Uterus (tissue), 4 donors: ENCODE measurements at regions of chr16 and their contacts with region 1.

Region 1: GRCh38 chr16:70523076-70523742 is at the start of gene COG4:
- DNase-seq: peak; percentile 80 to 85
- H3K4me3 ChIP-seq: peak within 1 kb of the TSS; percentile 90 to 95
- H3K27ac ChIP-seq: peak within 1 kb of the TSS; percentile 89 to 90
- H3K4me1 ChIP-seq: peaks cover 16 to 33% of the 10 kb centered on the region in 2 donors
- H3K27me3 ChIP-seq: no peaks in the 10 kb centered on the region
- CTCF ChIP-seq: no peak
- POLR2A ChIP-seq: no peak
- total RNA-seq, gene COG4: 33.3 to 137 (median 67.1) TPM

Region 2: GRCh38 chr16:70416748-70417616 is 106.2 kb before region 1 on chr16:
- intact Hi-C with region 1: no loop called
- DNase-seq: no peak
- H3K4me3 ChIP-seq: no peak overlapping the region
- H3K27ac ChIP-seq: no peak overlapping the region
- H3K4me1 ChIP-seq: peaks cover 0 to 6% of the 10 kb centered on the region in 2 donors
- H3K27me3 ChIP-seq: no peaks in the 10 kb centered on the region
- CTCF ChIP-seq: no peak
- POLR2A ChIP-seq: no peak

Region 3: DNA sequence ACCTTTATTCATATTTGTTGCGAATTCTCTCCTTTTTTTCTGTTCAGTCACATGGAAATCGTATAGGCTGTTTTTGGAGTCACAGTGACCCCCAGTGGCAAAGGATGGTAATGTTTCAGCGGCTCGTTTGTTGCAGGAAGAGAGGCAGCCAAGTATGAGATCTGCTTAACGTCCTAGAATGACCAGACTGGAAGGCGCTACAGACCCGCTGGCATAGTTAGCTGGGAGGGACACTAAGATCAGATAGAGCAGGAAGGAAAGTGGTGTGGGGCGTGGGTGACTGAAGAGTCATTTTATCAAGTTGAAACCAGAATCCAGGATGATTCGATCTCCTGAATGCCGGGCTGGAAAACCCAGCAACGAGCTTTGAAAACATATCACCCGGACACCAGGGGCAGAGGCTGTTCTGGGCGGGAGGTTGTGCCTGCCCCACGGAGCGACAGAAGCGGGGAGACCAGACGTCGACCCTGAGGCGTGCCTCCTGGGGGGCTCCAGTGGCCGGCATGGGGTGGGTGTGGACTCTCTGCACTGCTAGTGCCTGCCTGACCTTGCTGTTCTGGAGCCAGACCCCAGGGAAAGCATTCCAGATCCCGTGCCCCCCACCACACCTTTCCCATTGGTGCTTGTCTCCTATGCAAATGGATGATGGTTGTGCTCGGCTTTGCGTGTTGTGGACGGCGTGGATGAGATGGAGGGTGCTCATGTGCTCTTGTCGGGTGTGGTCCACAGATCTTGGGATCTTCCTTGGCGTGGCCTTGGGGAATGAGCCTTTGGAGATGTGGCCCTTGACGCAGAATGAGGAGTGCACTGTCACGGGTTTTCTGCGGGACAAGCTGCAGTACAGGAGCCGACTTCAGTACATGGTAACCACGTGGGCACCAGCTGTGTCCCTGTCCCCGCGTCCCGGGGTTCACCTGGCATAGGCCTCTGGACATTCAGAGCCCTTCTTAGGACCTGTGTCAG is 130.9 kb after region 1 on chr16:
- intact Hi-C with region 1: loop called (anchors 10 kb)
- DNase-seq: peak; percentile 87 to 91
- H3K4me3 ChIP-seq: no peak overlapping the region
- H3K27ac ChIP-seq: peak overlapping the region; percentile 29
- H3K4me1 ChIP-seq: no peaks in the 10 kb centered on the region
- H3K27me3 ChIP-seq: no peaks in the 10 kb centered on the region
- CTCF ChIP-seq: peak; percentile 86 to 96 (median 94)
- POLR2A ChIP-seq: no peak